Activated CD4-positive, alpha-beta memory T cell treated with anti-CD3 and anti-CD28 coated beads for 36 hours (primary cell): ENCODE measurements at regions of chr17 and their contacts with region 1.

Region 1: GRCh38 chr17:66420961-66421371 is 118.6 kb downstream of the PRKCA start:
- DNase-seq: no peak
- H3K4me3 Mint-ChIP-seq: no peak overlapping the region
- H3K27ac Mint-ChIP-seq: peak overlapping the region; percentile 50
- H3K4me1 Mint-ChIP-seq: peaks cover 77% of the 10 kb centered on the region
- H3K27me3 Mint-ChIP-seq: no peaks in the 10 kb centered on the region

Region 2: GRCh38 chr17:66364990-66365490 is 55.9 kb before region 1 on chr17:
- CTCF ChIA-PET with region 1: interaction called, 3 read pairs
- POLR2A ChIA-PET with region 1: interaction called, 3 read pairs
- intact Hi-C with region 1: loop called (anchors 5 kb)
- DNase-seq: no peak
- H3K4me3 Mint-ChIP-seq: peak overlapping the region; percentile 35
- H3K27ac Mint-ChIP-seq: peak overlapping the region; percentile 77
- H3K4me1 Mint-ChIP-seq: peaks cover 86% of the 10 kb centered on the region
- H3K27me3 Mint-ChIP-seq: no peaks in the 10 kb centered on the region

Region 3: GRCh38 chr17:66383333-66383732 is 37.6 kb before region 1 on chr17:
- CTCF ChIA-PET with region 1: no interaction called
- POLR2A ChIA-PET with region 1: interaction called, 3 read pairs
- intact Hi-C with region 1: loop called (anchors 5 kb)
- DNase-seq: no peak
- H3K4me3 Mint-ChIP-seq: no peak overlapping the region
- H3K27ac Mint-ChIP-seq: peak overlapping the region; percentile 40
- H3K4me1 Mint-ChIP-seq: peaks cover 66% of the 10 kb centered on the region
- H3K27me3 Mint-ChIP-seq: no peaks in the 10 kb centered on the region

Region 4: DNA sequence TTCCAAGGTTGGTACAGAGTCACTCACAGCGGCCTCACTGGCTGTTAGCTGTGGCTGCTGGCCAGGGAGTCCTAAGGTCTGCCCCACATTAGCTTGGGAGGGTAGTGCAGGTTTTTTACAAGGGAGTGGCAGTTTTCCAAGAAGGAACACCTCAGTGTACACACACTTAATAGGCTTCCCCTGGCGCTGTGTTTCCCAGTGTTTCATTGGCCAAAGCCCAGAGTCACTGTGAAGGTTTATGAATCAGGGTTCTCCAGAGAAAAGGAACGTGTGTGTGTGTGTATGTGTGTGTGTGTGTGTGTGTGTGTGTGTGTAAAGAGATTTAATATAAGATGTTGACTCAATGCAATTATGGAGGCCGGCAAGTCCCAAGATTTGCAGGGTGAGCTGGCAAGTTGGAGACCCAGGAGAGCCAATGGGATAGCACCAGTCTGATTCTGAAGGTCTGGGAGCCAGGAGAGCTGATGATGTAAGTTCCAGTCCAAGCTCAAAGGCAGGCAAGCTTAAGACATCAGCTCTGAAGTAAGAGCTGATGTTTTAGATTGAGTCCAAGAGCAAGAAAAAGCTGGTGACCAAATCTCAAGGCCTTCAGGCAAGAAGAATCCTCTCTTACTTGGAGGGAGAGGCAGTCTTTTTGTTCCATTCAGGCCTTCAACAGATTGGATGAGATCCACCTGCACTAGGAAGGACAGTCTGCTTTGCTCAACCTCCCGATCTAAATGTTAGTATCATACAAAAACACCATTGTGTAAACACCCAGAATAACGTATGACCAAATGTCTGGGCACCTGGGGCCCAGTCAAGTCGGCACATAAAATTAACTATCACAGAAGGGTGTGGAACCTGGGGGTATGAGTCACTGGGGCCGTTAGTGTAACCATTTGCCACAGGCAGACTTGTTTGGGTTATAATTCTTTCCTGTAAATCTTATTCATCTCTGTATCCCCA is 88.2 kb after region 1 on chr17:
- CTCF ChIA-PET with region 1: no interaction called
- POLR2A ChIA-PET with region 1: no interaction called
- intact Hi-C with region 1: loop called (anchors 5 kb)
- DNase-seq: peak; percentile 82
- H3K4me3 Mint-ChIP-seq: peak overlapping the region; percentile 54
- H3K27ac Mint-ChIP-seq: peak overlapping the region; percentile 91
- H3K4me1 Mint-ChIP-seq: peaks cover 76% of the 10 kb centered on the region
- H3K27me3 Mint-ChIP-seq: no peaks in the 10 kb centered on the region